Posterior vena cava (tissue), 2 donors: ENCODE measurements at regions of chr9 and their contacts with region 1.

Region 1: GRCh38 chr9:134420974-134421432 is 94.7 kb downstream of the RXRA start:
- DNase-seq: no peak

Region 2: GRCh38 chr9:134377976-134378375 is 43.0 kb before region 1 on chr9:
- intact Hi-C with region 1: loop called in 1 of 2 experiments (anchors 1 kb)
- DNase-seq: peak; percentile 89

Region 3: GRCh38 chr9:134502809-134503211 is 81.8 kb after region 1 on chr9:
- intact Hi-C with region 1: no loop called
- DNase-seq: peak; percentile 93